ENCODE measurements at regions of chr2 and their contacts with region 1.

Region 1: GRCh38 chr2:229910832-229911412 is 10.9 kb downstream of the TRIP12 start:
- H3K4me3 ChIP-seq: no peak overlapping the region
- H3K27ac ChIP-seq: no peak overlapping the region
- H3K4me1 ChIP-seq: peaks cover 23% of the 10 kb centered on the region
- CTCF ChIP-seq: peak; percentile 25; the same call in 1 of the 2 replicates

Region 2: GRCh38 chr2:229591611-229592010 is 319.3 kb before region 1 on chr2:
- CTCF ChIA-PET with region 1: no interaction called
- POLR2A ChIA-PET with region 1: no interaction called
- H3K4me3 ChIP-seq: no peak overlapping the region
- H3K27ac ChIP-seq: no peak overlapping the region
- H3K4me1 ChIP-seq: no peaks in the 10 kb centered on the region
- CTCF ChIP-seq: no peak

Region 3: DNA sequence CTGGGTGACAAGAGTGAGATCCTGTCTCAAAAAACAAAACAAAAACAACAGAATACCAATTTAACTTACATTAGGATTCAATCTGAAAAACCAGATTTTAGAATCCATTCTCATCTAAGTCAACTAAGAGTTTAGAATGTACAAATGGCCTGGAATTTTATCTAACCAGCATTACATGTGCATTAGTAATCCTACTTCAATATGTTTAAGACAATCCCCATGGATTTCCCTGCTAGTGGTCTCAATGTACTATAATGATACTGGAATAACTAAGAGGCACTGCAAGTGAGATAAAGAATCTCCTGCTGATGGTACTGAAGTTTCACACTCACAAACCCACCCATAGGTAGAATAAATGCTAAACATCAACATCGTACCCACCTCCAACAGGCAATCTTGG is 142.7 kb before region 1 on chr2:
- CTCF ChIA-PET with region 1: no interaction called
- POLR2A ChIA-PET with region 1: no interaction called
- H3K4me3 ChIP-seq: no peak overlapping the region
- H3K27ac ChIP-seq: no peak overlapping the region
- H3K4me1 ChIP-seq: no peaks in the 10 kb centered on the region
- CTCF ChIP-seq: no peak

Region 4: GRCh38 chr2:229873123-229873581 is 37.8 kb before region 1 on chr2:
- CTCF ChIA-PET with region 1: no interaction called
- POLR2A ChIA-PET with region 1: no interaction called
- H3K4me3 ChIP-seq: no peak overlapping the region
- H3K27ac ChIP-seq: no peak overlapping the region
- H3K4me1 ChIP-seq: peaks cover 19% of the 10 kb centered on the region
- CTCF ChIP-seq: no peak

Region 5: GRCh38 chr2:229921892-229922445 is 11.0 kb after region 1 on chr2 and contains the start of gene TRIP12:
- CTCF ChIA-PET with region 1: interaction called, 7 read pairs
- POLR2A ChIA-PET with region 1: interaction called, 17 read pairs
- H3K4me3 ChIP-seq: peak within 1 kb of the TSS; percentile 95
- H3K27ac ChIP-seq: peak within 1 kb of the TSS; percentile 92
- H3K4me1 ChIP-seq: no peaks in the 10 kb centered on the region
- CTCF ChIP-seq: 0 out of 2 replicates have a peak, but pooled peaks have one; percentile 13

Region 6: GRCh38 chr2:230721712-230722111 is 810.8 kb after region 1 on chr2:
- CTCF ChIA-PET with region 1: no interaction called
- POLR2A ChIA-PET with region 1: no interaction called
- H3K4me3 ChIP-seq: no peak overlapping the region
- H3K27ac ChIP-seq: no peak overlapping the region
- H3K4me1 ChIP-seq: peaks cover 7% of the 10 kb centered on the region; the same call in 1 of the 2 replicates
- CTCF ChIP-seq: no peak

Measured in HEK293 (cell line).